Aorta (tissue), 5 donors: ENCODE measurements at regions of chr17 and their contacts with region 1.

Region 1: DNA sequence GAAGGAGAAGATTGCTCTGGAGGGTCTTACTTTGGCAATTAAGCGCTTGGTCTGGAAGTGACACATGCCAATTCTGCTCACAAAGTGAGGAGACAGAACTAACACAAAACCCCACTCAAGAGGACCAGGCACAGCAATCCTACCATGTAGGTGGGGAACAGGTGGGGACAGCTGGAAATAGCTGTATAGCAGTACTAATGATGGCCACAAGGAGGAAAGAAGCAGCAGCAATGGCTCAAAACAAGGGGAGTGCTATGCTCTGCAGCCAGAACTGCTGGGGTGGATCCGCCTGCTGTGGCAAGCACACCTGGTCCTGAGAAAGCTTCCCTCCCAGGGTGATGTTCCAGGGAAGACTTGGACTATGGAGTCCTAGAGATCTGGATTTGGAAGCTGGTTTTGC is 17.0 kb upstream of the TMEM132E start:
- DNase-seq: no peak
- ATAC-seq: no peak
- H3K4me3 ChIP-seq: no peak overlapping the region
- H3K27ac ChIP-seq: no peak overlapping the region
- H3K4me1 ChIP-seq: no peaks in the 10 kb centered on the region
- H3K27me3 ChIP-seq: no peaks in the 10 kb centered on the region

Region 2: GRCh38 chr17:34156741-34157589 is 405.4 kb before region 1 on chr17:
- intact Hi-C with region 1: loop called in 1 of 2 experiments (anchors 10 kb)
- DNase-seq: no peak
- ATAC-seq: no peak
- H3K4me3 ChIP-seq: no peak overlapping the region
- H3K27ac ChIP-seq: no peak overlapping the region
- H3K4me1 ChIP-seq: no peaks in the 10 kb centered on the region
- H3K27me3 ChIP-seq: no peaks in the 10 kb centered on the region

Region 3: GRCh38 chr17:34584805-34585416 is 22.5 kb after region 1 on chr17:
- intact Hi-C with region 1: no loop called
- DNase-seq: peak in 1 of 2 donors; percentile 36
- ATAC-seq: no peak
- H3K4me3 ChIP-seq: no peak overlapping the region
- H3K27ac ChIP-seq: no peak overlapping the region
- H3K4me1 ChIP-seq: no peaks in the 10 kb centered on the region
- H3K27me3 ChIP-seq: no peaks in the 10 kb centered on the region

Region 4: GRCh38 chr17:34637548-34638525 is 75.5 kb after region 1 on chr17:
- intact Hi-C with region 1: no loop called
- DNase-seq: peak; percentile 83 to 89
- ATAC-seq: peak; percentile 76
- H3K4me3 ChIP-seq: no peak overlapping the region
- H3K27ac ChIP-seq: no peak overlapping the region
- H3K4me1 ChIP-seq: no peaks in the 10 kb centered on the region
- H3K27me3 ChIP-seq: no peaks in the 10 kb centered on the region